Activated naive CD4-positive, alpha-beta T cell treated with anti-CD3 and anti-CD28 coated beads, Interleukin-2, amount 10 ng/mL, durations not matched to agents 7 days and 5 days (primary cell): ENCODE measurements at regions of chr2 and their contacts with region 1.

Region 1: GRCh38 chr2:189661148-189661956 is at the start of gene ASNSD1:
- DNase-seq: peak; percentile 98
- H3K4me3 Mint-ChIP-seq: no peak within 1 kb of the TSS
- H3K27ac Mint-ChIP-seq: no peak within 1 kb of the TSS
- H3K4me1 Mint-ChIP-seq: peaks cover 52% of the 10 kb centered on the region
- H3K27me3 Mint-ChIP-seq: no peaks in the 10 kb centered on the region

Region 2: DNA sequence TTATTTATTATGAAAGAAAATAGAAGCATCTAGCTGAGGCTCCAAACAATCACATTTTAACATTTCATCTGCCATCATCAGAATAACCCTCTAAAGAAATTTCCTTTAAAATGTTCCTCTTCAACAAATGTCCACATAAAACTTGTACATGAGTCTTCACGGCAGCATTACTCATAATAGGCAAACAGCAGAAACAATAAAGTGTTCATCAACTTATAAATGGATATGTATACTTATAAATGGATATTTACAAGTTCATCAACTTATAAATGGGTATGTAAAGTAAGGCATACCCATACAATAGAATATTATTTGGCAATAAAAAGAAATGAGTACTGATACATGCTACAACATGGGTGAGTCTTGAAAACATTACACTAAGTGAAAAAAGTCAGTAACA is 33.6 kb before region 1 on chr2:
- CTCF ChIA-PET with region 1: no interaction called
- DNase-seq: no peak
- H3K4me3 Mint-ChIP-seq: no peak overlapping the region
- H3K27ac Mint-ChIP-seq: no peak overlapping the region
- H3K4me1 Mint-ChIP-seq: peaks cover 7% of the 10 kb centered on the region
- H3K27me3 Mint-ChIP-seq: peaks cover 6% of the 10 kb centered on the region

Region 3: DNA sequence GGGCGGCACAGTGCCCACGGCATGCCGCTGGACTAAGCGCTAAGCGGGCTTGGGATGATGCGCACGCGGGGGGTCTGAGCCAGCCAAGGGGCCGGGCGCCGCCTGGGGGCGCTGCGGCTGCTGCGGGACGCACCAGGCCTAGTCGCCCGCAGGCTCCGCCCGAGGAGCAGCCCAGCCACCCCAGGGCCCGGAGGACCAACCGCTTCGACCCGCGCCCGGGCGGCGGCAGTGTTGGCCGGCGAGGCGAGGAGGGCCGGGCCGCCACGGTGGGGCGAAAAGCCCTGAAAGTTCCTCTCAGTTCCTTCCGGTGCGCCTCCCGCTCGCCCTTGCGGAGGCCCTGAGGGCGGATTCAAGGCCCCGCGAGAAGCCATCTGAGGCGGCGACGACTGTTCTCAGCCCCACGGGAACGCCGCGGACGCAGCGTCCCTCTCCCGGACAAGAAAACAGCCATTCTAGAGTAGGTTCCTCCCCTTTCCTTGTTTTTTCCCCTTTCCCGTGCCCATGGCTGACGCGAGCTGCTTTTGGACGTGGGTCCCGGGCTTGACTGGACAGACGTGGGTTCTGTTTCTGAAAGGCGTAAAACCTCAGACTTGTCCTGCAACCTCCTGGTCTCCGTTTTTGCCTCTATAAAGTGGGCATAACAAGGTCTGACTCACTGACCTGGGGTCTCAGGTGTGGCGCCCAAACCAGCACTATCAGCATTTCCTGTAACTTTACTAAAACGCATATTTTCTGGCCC is 13.2 kb after region 1 on chr2 and contains the start of gene ANKAR:
- CTCF ChIA-PET with region 1: interaction called, 19 read pairs
- DNase-seq: peak; percentile 79
- H3K4me3 Mint-ChIP-seq: peak within 1 kb of the TSS; percentile 85
- H3K27ac Mint-ChIP-seq: peak within 1 kb of the TSS; percentile 94
- H3K4me1 Mint-ChIP-seq: peaks cover 28% of the 10 kb centered on the region
- H3K27me3 Mint-ChIP-seq: no peaks in the 10 kb centered on the region

Region 4: GRCh38 chr2:189698020-189698887 is 36.9 kb after region 1 on chr2:
- CTCF ChIA-PET with region 1: interaction called, 54 read pairs
- DNase-seq: peak; percentile 54
- H3K4me3 Mint-ChIP-seq: peak overlapping the region; percentile 21
- H3K27ac Mint-ChIP-seq: peak overlapping the region; percentile 64
- H3K4me1 Mint-ChIP-seq: peaks cover 2% of the 10 kb centered on the region
- H3K27me3 Mint-ChIP-seq: no peaks in the 10 kb centered on the region

Region 5: GRCh38 chr2:189751080-189751658 is 89.8 kb after region 1 on chr2:
- CTCF ChIA-PET with region 1: interaction called, 10 read pairs
- DNase-seq: peak; percentile 60
- H3K4me3 Mint-ChIP-seq: no peak overlapping the region
- H3K27ac Mint-ChIP-seq: no peak overlapping the region
- H3K4me1 Mint-ChIP-seq: no peaks in the 10 kb centered on the region
- H3K27me3 Mint-ChIP-seq: no peaks in the 10 kb centered on the region

Region 6: GRCh38 chr2:189762551-189763298 is 101.4 kb after region 1 on chr2 and contains the start of gene OSGEPL1:
- CTCF ChIA-PET with region 1: interaction called, 21 read pairs
- DNase-seq: peak; percentile 97
- H3K4me3 Mint-ChIP-seq: peak within 1 kb of the TSS; percentile 85
- H3K27ac Mint-ChIP-seq: peak within 1 kb of the TSS; percentile 97
- H3K4me1 Mint-ChIP-seq: peaks cover 20% of the 10 kb centered on the region
- H3K27me3 Mint-ChIP-seq: no peaks in the 10 kb centered on the region